Heart right ventricle (tissue), 16 donors: ENCODE measurements at regions of chr15 and their contacts with region 1.

Region 1: GRCh38 chr15:75327005-75327404 is 8.9 kb upstream of the COMMD4 start:
- DNase-seq: no peak
- ATAC-seq: no peak
- H3K4me3 ChIP-seq: no peak overlapping the region
- H3K27ac ChIP-seq: no peak overlapping the region
- H3K4me1 ChIP-seq: no peaks in the 10 kb centered on the region
- H3K27me3 ChIP-seq: no peaks in the 10 kb centered on the region
- CTCF ChIP-seq: no peak

Region 2: DNA sequence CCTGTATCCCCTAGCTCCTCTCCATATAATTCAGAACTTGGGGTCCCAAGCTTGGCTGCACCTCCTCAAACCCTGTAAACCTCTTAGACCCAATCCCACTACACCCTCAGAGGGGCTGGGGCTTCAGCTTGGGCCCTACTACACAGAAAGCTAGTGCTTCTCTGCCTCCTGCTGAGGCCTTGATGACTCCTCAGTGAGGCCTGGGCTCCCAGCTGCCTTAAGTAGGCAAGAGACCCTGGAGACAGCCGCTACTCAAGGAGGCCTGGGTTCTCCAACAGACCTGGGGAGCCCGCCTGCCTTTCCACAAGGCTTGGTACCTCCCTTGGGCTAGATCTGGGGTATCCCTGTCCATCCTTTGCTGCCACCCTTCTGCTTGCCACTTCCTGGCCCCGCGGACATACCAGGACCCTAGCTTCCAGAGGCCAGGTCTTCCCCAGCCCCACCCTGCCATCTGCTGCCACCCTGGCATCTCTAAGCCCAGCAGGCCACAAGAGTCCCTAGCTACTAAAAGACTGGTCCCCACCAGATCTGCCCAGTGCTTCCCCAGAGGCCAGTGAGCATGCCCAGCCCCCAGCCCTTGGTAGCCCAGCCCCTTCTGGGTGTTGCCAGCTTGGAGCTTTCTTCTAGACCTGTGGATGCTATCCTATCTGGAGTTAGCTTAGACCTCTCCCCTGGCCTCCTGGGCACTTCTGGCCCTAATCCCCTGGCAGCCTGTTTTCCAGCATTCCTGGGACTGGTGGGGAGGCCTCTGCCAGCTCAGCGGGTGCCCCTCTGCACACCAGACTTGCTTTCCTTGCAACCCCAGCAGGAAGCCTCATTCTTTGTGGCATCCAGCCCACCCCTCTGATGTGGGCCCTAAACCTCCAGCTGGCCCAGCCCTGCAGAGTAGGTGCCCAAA is 111.6 kb before region 1 on chr15:
- intact Hi-C with region 1: loop called in 1 of 10 experiments (anchors 10 kb)
- DNase-seq: no peak
- ATAC-seq: peak in 4 of 8 donors; percentile 2 to 14 (median 12)
- H3K4me3 ChIP-seq: no peak overlapping the region
- H3K27ac ChIP-seq: no peak overlapping the region
- H3K4me1 ChIP-seq: peaks cover 2 to 31% (median 23%) of the 10 kb centered on the region in 9 donors
- H3K27me3 ChIP-seq: no peaks in the 10 kb centered on the region
- CTCF ChIP-seq: no peak

Region 3: GRCh38 chr15:75389791-75390382 is 62.9 kb after region 1 on chr15:
- intact Hi-C with region 1: loop called in 1 of 10 experiments (anchors 10 kb)
- DNase-seq: no peak
- ATAC-seq: no peak
- H3K4me3 ChIP-seq: no peak overlapping the region
- H3K27ac ChIP-seq: no peak overlapping the region
- H3K4me1 ChIP-seq: peaks cover 0 to 9% (median 0%) of the 10 kb centered on the region in 9 donors
- H3K27me3 ChIP-seq: no peaks in the 10 kb centered on the region
- CTCF ChIP-seq: no peak